ENCODE measurements at regions of chr1 and their contacts with region 1.

Region 1: DNA sequence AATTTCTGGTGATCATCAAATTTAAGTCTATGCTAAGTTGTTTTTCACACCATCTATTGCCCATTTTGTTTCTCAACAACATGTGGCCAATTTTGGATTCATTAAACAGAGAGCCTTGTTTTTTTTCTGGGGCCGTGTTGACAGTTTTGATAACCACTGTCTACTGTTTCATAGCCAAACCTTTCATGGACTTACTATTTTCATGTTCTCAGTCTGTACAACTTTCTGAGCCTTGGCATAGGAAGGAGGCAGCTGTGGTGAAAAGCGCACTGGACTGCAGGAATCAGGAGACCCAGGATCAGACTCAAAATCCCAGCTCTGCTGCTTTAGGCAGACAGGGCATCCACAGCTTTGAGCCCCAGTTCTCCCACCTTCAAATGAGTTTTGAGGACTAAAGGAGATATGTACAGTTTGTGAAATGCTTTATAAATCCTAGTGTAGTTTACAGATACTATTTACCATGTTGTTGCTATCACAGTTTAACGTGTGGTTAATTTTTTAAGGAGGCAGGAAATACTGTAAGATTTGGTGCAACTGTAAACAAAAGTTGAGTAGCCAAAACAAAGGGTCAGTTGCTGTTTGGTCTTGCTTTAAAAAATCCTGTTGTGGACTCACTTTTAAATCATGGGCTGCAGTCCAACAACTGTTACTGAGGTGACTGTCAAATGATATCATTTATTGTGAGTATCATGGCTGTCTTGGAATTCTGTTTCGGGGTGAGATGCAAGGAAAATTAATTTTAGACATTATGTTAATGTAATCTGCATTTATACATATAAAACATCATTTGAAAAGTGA is 2.9 kb downstream of the MACO1 start:
- DNase-seq: no peak
- ATAC-seq: no peak
- H3K4me3 ChIP-seq: no peak overlapping the region
- H3K4me3 Mint-ChIP-seq: peak overlapping the region; percentile 6 to 84 (median 81)
- H3K27ac ChIP-seq: peak overlapping the region; percentile 5
- H3K27ac Mint-ChIP-seq: peak overlapping the region; percentile 87 to 88
- H3K4me1 ChIP-seq: peaks cover 11 to 35% of the 10 kb centered on the region in 2 experiments
- H3K4me1 Mint-ChIP-seq: peaks cover 60 to 72% (median 67%) of the 10 kb centered on the region in 3 donors
- H3K27me3 ChIP-seq: no peaks in the 10 kb centered on the region
- H3K27me3 Mint-ChIP-seq: no peaks in the 10 kb centered on the region

Region 2: GRCh38 chr1:23897083-23897482 is 1536.5 kb before region 1 on chr1:
- CTCF ChIA-PET with region 1: no interaction called
- POLR2A ChIA-PET with region 1: interaction called in 1 of 2 experiments, 11 read pairs
- DNase-seq: no peak
- ATAC-seq: no peak
- H3K4me3 ChIP-seq: no peak overlapping the region
- H3K4me3 Mint-ChIP-seq: no peak overlapping the region
- H3K27ac ChIP-seq: no peak overlapping the region
- H3K27ac Mint-ChIP-seq: no peak overlapping the region
- H3K4me1 ChIP-seq: peaks cover 6 to 28% of the 10 kb centered on the region in 2 experiments
- H3K4me1 Mint-ChIP-seq: peaks cover 13 to 26% (median 15%) of the 10 kb centered on the region in 3 donors
- H3K27me3 ChIP-seq: peaks cover 0 to 6% of the 10 kb centered on the region in 2 experiments
- H3K27me3 Mint-ChIP-seq: peaks cover 0 to 4% of the 10 kb centered on the region in 2 donors

Region 3: GRCh38 chr1:25182629-25183028 is 251.0 kb before region 1 on chr1:
- CTCF ChIA-PET with region 1: no interaction called
- POLR2A ChIA-PET with region 1: no interaction called
- DNase-seq: no peak
- ATAC-seq: no peak
- H3K4me3 ChIP-seq: no peak overlapping the region
- H3K4me3 Mint-ChIP-seq: no peak overlapping the region
- H3K27ac ChIP-seq: no peak overlapping the region
- H3K27ac Mint-ChIP-seq: no peak overlapping the region
- H3K4me1 ChIP-seq: no peaks in the 10 kb centered on the region
- H3K4me1 Mint-ChIP-seq: no peaks in the 10 kb centered on the region
- H3K27me3 ChIP-seq: peaks cover 0 to 24% of the 10 kb centered on the region in 2 experiments
- H3K27me3 Mint-ChIP-seq: peaks cover 0 to 16% of the 10 kb centered on the region in 2 donors